Activated CD4-positive, alpha-beta memory T cell treated with anti-CD3 and anti-CD28 coated beads, Interleukin-2, amount 10 ng/mL, durations not matched to agents 7 days and 5 days (primary cell): ENCODE measurements at regions of chr2 and their contacts with region 1.

Region 1: DNA sequence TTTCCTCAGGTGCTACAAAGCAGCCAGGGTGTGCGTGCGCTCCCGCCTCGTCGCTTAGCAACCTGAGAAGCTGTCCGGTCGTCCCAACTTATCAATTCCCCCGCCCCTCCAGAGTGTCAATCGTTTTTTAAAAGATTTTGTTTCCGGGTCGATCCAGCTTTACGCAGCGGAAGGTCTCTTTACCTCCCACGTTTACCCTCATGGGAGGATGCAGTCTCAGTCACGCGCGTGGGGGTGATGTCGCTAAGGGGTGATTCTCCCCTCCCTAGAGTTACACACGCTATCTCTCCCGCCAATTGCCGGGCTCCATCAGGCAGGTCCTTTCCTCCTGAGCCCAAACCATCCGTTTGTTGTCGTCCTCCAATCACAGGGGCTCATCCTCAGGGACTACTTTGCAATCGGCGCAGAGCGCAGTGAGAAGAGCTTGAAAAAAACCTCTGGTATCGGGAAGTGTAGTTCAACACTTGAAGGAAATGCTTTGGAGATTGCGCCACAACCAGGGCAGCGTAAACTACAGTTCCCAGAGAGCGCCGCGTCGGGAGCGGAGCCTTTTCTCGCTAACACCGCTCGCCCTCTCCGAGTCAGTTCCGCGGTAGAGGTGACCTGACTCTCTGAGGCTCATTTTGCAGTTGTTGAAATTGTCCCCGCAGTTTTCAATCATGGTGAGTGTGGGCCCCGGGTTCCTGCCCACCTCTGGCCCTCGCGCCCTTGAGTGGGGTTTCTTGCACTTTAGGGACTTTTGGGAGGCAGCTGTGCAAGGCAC is at the starts of genes MDH1 and WDPCP:
- DNase-seq: peak; percentile 95
- H3K4me3 Mint-ChIP-seq: peak within 1 kb of the TSS; percentile 88
- H3K27ac Mint-ChIP-seq: peak within 1 kb of the TSS; percentile 95
- H3K4me1 Mint-ChIP-seq: peaks cover 35% of the 10 kb centered on the region
- H3K27me3 Mint-ChIP-seq: no peaks in the 10 kb centered on the region
- total RNA-seq, gene MDH1: 190 to 192 TPM
- total RNA-seq, gene WDPCP: 4.9 to 6.3 TPM

Region 2: DNA sequence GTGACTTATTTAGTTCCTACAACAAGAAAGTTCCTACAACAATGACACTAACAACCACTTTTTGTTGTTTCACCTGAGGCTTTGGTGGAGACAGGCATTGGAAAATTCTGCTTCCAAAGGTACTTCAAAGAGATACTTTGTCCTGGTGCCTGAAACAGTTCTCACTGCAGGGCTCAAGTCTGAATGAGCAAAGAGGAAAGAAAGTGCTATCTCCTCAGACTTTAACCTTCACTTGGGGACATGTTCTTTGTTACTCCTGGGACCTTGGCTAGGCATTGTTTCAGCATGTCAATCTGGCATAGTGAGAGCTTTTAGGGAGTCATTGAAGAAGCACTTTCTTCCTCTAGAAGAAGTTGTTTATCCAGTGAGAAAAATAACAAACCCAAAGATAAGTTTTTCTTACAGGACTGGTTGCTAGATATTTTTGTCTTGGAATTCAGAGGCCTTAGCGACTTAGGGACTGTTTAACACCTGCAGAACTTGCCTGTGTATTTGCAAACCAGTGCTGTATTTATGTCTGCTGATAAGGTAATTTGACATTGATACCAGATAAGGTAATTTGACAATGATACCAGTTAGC is 12.4 kb after region 1 on chr2:
- CTCF ChIA-PET with region 1: interaction called, 4 read pairs
- POLR2A ChIA-PET with region 1: interaction called, 18 read pairs
- DNase-seq: no peak
- H3K4me3 Mint-ChIP-seq: no peak overlapping the region
- H3K27ac Mint-ChIP-seq: no peak overlapping the region
- H3K4me1 Mint-ChIP-seq: no peaks in the 10 kb centered on the region
- H3K27me3 Mint-ChIP-seq: no peaks in the 10 kb centered on the region

Region 3: DNA sequence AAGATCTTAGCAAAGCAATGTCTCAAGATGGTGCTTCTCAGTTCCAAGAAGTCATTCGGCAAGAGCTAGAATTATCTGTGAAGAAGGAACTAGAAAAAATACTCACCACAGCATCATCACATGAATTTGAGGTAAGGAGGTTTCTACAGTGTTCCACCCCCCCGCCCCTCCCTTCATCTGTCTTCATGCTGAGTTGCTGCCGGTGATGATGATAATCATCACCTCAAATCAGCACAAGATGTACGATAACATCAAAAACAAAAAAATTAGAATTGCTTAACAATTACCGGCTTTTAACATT is 267.7 kb after region 1 on chr2:
- CTCF ChIA-PET with region 1: interaction called, 8 read pairs
- POLR2A ChIA-PET with region 1: interaction called, 53 read pairs
- DNase-seq: peak; percentile 74
- H3K4me3 Mint-ChIP-seq: peak overlapping the region; percentile 51
- H3K27ac Mint-ChIP-seq: peak overlapping the region; percentile 99
- H3K4me1 Mint-ChIP-seq: peaks cover 77% of the 10 kb centered on the region
- H3K27me3 Mint-ChIP-seq: no peaks in the 10 kb centered on the region

Region 4: DNA sequence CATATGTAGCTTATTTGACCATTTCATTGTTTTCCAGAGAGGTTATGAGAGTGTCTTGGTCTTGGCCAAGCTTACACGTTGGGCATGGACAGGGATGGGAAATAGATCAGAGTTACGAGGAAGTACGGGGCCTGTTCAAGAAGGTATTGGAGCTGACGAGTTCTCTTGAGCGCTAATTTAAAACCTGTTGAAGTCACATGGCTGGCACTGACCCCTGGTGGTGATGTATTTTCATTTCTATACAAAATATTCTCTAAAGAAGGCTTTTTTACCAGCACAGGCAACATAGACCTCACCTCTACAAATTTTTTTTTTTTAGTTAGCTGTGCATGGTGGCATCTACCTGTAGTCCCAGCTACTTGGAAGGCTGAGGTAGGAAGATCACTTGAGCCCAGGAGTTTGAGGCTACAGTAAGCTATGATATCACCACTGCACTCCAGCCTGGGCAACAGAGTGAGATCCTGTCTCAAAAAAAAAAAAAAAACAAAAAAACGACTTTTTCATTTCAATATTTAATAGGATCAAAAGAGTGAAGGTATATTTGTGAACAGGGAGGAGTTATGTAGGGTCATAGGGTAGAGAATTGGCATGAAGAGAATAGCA is 272.8 kb after region 1 on chr2:
- CTCF ChIA-PET with region 1: interaction called, 8 read pairs
- POLR2A ChIA-PET with region 1: interaction called, 53 read pairs
- DNase-seq: peak; percentile 55
- H3K4me3 Mint-ChIP-seq: no peak overlapping the region
- H3K27ac Mint-ChIP-seq: no peak overlapping the region
- H3K4me1 Mint-ChIP-seq: peaks cover 58% of the 10 kb centered on the region
- H3K27me3 Mint-ChIP-seq: no peaks in the 10 kb centered on the region

Region 5: GRCh38 chr2:64018923-64019718 is 430.6 kb after region 1 on chr2 and contains the start of gene VPS54:
- CTCF ChIA-PET with region 1: no interaction called
- POLR2A ChIA-PET with region 1: interaction called, 11 read pairs
- DNase-seq: peak; percentile 65
- H3K4me3 Mint-ChIP-seq: peak within 1 kb of the TSS; percentile 98
- H3K27ac Mint-ChIP-seq: peak within 1 kb of the TSS; percentile 96
- H3K4me1 Mint-ChIP-seq: peaks cover 42% of the 10 kb centered on the region
- H3K27me3 Mint-ChIP-seq: no peaks in the 10 kb centered on the region
- total RNA-seq, gene VPS54: 18.8 to 19.2 TPM